Gastrocnemius medialis (tissue), 4 donors: ENCODE measurements at regions of chr21 and their contacts with region 1.

Region 1: DNA sequence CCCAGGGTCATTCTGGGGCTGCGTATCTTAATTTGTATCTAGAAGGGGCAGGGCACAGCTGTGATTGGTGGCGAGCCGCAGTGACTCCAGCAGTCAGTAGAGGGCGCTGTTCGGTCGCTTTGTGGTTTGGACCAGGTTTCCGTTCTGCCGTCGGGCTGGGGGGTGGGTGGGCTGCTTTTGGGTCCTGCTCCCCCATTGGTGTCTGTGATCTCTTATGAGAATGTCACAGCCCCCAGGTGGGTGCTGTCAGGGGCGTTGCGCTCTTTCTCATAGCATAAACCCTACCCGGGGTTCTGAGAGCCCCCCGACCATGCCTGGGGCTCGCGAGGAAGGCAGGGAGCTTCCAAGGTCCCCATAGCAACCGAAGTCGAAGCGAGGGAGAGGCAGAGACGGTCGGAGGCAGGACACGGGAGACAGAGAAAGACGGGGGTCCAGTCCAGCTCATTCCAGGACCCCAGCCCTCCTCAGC is 5.4 kb downstream of the TFF3 start:
- DNase-seq: no peak
- ATAC-seq: peak; percentile 37 to 62
- H3K4me3 ChIP-seq: no peak overlapping the region
- H3K27ac ChIP-seq: no peak overlapping the region
- H3K4me1 ChIP-seq: peaks cover 0 to 5% of the 10 kb centered on the region in 2 donors
- H3K27me3 ChIP-seq: peaks cover 0 to 21% (median 9%) of the 10 kb centered on the region in 3 donors
- CTCF ChIP-seq: peak; percentile 54 to 82 (median 63)
- POLR2A ChIP-seq: no peak

Region 2: DNA sequence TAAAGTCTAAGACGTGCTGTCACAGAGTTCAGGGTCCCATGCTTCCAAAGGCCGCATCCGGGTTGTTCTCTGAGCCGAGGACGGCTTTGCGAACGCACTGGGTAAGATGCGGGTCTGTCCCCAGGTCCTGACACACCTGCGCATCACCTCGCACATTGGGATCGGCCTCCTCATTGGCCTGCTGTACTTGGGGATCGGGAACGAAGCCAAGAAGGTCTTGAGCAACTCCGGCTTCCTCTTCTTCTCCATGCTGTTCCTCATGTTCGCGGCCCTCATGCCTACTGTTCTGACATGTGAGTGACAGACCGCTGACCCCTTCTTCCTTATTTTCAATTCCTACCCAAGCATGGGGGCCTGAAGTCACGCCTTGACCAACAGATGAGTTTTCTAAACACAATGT is 19.9 kb before region 1 on chr21:
- in situ Hi-C with region 1: no loop called
- intact Hi-C with region 1: loop called (anchors 2 kb)
- DNase-seq: peak; percentile 37 to 41
- ATAC-seq: no peak
- H3K4me3 ChIP-seq: no peak overlapping the region
- H3K27ac ChIP-seq: no peak overlapping the region
- H3K4me1 ChIP-seq: no peaks in the 10 kb centered on the region
- H3K27me3 ChIP-seq: no peaks in the 10 kb centered on the region
- CTCF ChIP-seq: no peak
- POLR2A ChIP-seq: no peak

Region 3: GRCh38 chr21:42537106-42537742 is 227.4 kb after region 1 on chr21:
- in situ Hi-C with region 1: no loop called
- intact Hi-C with region 1: loop called (anchors 2 kb)
- DNase-seq: no peak
- ATAC-seq: no peak
- H3K4me3 ChIP-seq: no peak overlapping the region
- H3K27ac ChIP-seq: peak overlapping the region in 1 of 4 donors; percentile 2
- H3K4me1 ChIP-seq: peaks cover 18 to 28% of the 10 kb centered on the region in 2 donors
- H3K27me3 ChIP-seq: no peaks in the 10 kb centered on the region
- CTCF ChIP-seq: peak in 4 of 5 experiments; percentile 32 to 49 (median 36)
- POLR2A ChIP-seq: no peak